Activated B cell treated with CpG ODN at 0.5 μM for 24 hours (primary cell): ENCODE measurements at regions of chr11 and their contacts with region 1.

Region 1: GRCh38 chr11:111299101-111300026 is 1.0 kb downstream of the POU2AF3 start:
- DNase-seq: peak; percentile 47
- ATAC-seq: peak; percentile 70
- H3K4me3 Mint-ChIP-seq: peak overlapping the region; percentile 81
- H3K27ac Mint-ChIP-seq: no peak overlapping the region
- H3K4me1 Mint-ChIP-seq: peaks cover 41% of the 10 kb centered on the region
- H3K27me3 Mint-ChIP-seq: peaks cover 11% of the 10 kb centered on the region
- CTCF ChIP-seq: no peak

Region 2: GRCh38 chr11:111259896-111260295 is 39.5 kb before region 1 on chr11:
- CTCF ChIA-PET with region 1: no interaction called
- POLR2A ChIA-PET with region 1: no interaction called
- intact Hi-C with region 1: no loop called
- DNase-seq: no peak
- ATAC-seq: no peak
- H3K4me3 Mint-ChIP-seq: no peak overlapping the region
- H3K27ac Mint-ChIP-seq: no peak overlapping the region
- H3K4me1 Mint-ChIP-seq: no peaks in the 10 kb centered on the region
- H3K27me3 Mint-ChIP-seq: peaks cover 19% of the 10 kb centered on the region
- CTCF ChIP-seq: no peak

Region 3: DNA sequence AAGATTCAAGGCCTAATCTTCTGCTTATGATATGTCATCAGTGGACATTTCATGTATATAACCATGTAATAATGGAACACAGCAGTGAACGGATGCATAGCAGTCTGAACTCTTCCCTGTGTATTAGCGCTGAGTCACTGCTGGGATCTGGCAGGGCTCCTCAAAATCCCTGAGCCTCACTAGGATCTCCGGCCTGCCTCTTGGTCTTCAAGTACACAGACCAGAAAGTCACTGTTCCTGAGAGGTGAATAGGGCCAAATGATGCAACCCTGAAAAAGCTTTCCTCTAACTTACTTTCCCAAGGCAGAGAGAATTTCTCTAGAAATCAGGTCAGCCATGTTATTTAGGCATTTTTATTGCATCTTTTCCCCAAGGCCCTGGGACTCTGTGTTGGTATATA is 44.7 kb after region 1 on chr11:
- CTCF ChIA-PET with region 1: no interaction called
- POLR2A ChIA-PET with region 1: no interaction called
- intact Hi-C with region 1: loop called (anchors 5 kb)
- DNase-seq: no peak
- ATAC-seq: no peak
- H3K4me3 Mint-ChIP-seq: no peak overlapping the region
- H3K27ac Mint-ChIP-seq: no peak overlapping the region
- H3K4me1 Mint-ChIP-seq: peaks cover 32% of the 10 kb centered on the region
- H3K27me3 Mint-ChIP-seq: no peaks in the 10 kb centered on the region
- CTCF ChIP-seq: no peak